AG04449 (cell line): ENCODE measurements at regions of chr13 and their contacts with region 1.

Region 1: DNA sequence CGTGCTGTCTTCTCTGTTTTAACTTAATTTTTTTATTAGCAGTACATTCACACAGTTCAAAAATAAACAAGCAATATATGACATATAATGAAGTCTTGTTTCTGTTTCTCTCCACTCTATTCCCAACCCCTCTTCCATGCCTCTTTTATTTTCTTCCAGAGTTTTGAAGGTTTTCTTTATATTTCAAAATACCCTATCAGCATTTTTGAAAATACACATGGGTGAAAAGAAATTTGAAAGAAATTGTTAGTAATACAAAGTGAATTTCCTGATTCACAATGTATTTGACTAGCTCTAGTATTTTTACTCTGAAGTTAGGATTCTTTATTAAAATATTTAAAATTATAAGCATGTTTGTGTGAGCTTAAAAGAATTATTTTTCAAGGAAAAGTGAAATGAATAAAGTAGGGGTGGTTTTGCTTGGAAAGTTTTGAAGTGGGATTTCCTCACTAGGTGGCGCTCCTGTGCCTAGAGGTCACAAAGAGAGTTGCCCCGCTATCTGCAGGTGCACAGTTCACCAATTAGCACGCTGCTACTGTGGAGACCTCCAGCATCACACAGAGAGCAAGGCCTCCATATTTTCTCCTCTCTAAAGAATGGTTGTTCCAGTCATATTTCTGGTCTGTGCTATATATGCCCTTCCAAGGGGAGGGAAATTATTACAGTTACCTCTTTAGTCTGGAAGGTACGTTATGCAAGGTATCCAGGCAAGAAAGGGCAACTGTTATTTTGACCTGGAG is 37.6 kb downstream of the SOX21 start:
- DNase-seq: no peak
- H3K4me3 ChIP-seq: no peak overlapping the region
- CTCF ChIP-seq: peak; percentile 62

Region 2: DNA sequence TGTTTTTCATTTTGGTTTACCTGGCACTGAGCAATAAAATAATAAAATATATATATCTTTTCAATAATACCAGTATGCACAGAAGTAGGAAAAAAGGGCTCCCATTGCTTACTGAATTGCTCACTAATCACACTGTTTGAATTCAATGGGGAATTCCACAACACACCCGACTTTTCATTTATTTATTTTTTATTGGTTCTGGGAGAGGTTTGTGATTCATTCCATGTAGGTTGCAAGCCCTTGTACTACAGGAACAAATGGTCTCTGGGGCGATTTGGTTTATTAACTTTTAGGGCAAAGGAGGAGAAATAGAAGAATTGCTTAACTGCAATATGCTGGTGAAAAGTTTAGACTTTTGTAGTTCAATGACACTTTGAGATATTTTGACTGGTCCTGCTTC is 402.7 kb before region 1 on chr13:
- CTCF ChIA-PET with region 1: no interaction called
- POLR2A ChIA-PET with region 1: no interaction called
- DNase-seq: no peak
- H3K4me3 ChIP-seq: no peak overlapping the region
- CTCF ChIP-seq: no peak

Region 3: GRCh38 chr13:94583926-94584325 is 90.9 kb before region 1 on chr13:
- CTCF ChIA-PET with region 1: no interaction called
- POLR2A ChIA-PET with region 1: no interaction called
- DNase-seq: no peak
- H3K4me3 ChIP-seq: no peak overlapping the region
- CTCF ChIP-seq: no peak

Region 4: GRCh38 chr13:94660695-94661326 is 14.0 kb before region 1 on chr13:
- CTCF ChIA-PET with region 1: interaction called, 54 read pairs
- POLR2A ChIA-PET with region 1: no interaction called
- DNase-seq: no peak
- H3K4me3 ChIP-seq: no peak overlapping the region
- CTCF ChIP-seq: no peak

Region 5: DNA sequence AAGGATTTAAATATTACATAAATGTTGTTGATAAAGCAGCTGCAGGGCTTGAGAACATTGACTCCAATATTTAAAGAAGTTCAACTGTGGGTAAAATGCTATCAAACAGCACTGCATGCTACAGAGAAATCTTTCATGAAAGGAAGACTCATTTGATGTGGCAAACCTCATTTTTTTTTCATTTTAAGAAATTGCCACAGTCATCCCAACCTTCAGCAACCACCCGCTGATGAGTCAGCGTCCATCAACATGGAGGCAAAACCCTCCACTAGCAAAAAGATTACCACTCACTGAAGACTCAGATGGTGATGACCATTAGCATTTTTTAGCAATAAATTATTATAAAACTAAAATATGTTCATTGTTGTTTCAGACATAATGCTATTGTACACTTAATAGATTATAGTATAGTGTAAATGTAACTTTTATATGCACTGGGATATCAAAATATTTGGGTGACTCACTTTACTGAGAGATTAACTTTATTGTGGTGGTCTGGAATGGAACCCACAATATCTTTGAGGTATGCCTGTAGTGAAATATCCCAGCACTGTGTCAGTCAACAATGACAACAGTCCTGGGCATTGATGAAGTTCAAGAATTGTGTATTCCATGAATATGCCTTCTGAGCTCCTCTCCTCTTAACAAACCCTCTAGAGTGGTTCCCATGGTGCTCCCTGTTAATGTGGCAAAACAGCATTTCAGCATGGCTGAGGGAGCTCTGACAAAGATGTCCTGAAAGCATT is 90.0 kb after region 1 on chr13:
- CTCF ChIA-PET with region 1: no interaction called
- POLR2A ChIA-PET with region 1: no interaction called
- DNase-seq: no peak
- H3K4me3 ChIP-seq: no peak overlapping the region
- CTCF ChIP-seq: no peak

Region 6: DNA sequence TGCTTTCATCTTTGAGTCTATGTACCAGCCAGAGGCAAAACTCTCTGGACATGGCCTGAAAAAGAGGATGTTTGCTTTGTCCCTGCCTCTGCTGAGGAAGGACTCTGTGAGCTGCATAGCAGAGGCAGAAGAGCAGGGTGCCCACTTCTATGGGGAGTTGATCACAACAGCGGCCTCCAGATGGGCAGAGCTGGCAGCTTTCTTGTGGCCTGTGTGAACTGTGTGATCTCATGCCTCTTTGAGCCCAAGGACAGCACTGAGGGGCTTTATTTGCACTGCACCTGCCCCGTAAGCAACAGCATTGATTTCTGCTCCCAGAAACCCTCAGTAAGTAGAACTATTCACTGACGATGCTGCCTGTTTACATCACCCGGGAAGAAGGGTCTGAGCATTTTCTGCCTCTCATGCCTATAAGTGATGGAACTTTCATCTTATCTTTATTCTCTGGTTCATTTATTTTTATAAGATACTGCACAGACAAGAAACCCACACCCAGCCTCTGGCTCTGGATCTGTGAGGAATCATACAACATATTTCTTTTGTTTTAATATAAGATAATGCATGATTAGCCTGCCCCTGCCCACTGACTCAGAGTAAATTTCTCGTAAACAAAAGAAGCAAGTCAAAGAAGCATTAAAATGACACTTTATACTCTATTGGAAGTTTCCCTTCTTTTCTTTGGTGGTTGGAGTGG is 281.8 kb after region 1 on chr13:
- CTCF ChIA-PET with region 1: no interaction called
- POLR2A ChIA-PET with region 1: no interaction called
- DNase-seq: no peak
- H3K4me3 ChIP-seq: no peak overlapping the region
- CTCF ChIP-seq: no peak